Astrocyte of the cerebellum (primary cell): ENCODE measurements at regions of chr4 and their contacts with region 1.

Region 1: DNA sequence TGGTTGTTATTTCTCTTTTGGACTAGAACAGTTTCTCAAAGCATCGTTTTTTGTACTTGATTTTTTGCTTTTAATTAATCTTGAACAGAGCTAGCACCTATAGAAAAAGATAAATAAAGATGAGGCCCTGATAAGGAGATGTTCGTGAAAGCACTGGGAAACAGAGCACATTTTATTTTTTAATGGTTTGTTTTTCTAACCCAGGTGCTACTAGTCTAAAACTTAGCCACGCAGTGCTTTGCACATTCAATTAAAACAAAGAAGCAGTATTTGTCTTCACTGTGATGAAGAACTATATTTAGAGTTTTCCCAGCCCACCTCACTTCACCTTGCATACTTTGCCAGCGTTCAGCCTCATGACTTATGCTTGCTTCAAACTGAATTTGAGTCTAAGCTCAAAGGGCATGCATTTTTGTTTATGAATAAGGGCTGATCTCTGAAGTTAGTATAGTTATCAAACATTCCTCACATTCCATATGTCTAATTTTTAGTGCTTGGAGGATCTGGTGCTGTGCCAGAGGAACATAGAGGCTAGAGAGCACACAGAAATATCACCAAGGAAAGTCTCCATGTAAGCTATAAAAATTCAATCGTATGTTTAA is 76.7 kb downstream of the WWC2 start:
- DNase-seq: peak; percentile 4
- H3K4me3 ChIP-seq: no peak overlapping the region
- CTCF ChIP-seq: no peak

Region 2: DNA sequence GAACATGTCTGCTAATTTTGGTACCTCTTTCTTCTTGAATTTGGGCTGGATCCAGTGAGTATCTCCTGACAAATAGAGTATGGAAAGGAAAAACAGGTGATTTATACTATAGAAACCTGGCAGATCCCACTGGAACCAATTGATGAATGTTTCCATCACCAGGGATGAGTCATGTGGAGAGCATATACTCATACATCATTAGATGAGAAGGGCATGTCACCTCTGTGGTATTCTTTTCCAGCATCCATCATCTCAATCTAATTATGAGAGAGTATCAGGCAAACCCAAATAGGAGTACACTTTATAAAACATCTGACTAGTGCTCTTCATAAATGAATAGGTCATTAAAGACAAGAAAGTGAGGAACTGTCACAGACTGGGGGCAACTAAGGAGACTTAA is 53.7 kb after region 1 on chr4:
- in situ Hi-C with region 1: loop called (anchors 5 kb)
- DNase-seq: no peak
- H3K4me3 ChIP-seq: no peak overlapping the region
- CTCF ChIP-seq: no peak